Mammary epithelial cell (primary cell): ENCODE measurements at regions of chr16 and their contacts with region 1.

Region 1: DNA sequence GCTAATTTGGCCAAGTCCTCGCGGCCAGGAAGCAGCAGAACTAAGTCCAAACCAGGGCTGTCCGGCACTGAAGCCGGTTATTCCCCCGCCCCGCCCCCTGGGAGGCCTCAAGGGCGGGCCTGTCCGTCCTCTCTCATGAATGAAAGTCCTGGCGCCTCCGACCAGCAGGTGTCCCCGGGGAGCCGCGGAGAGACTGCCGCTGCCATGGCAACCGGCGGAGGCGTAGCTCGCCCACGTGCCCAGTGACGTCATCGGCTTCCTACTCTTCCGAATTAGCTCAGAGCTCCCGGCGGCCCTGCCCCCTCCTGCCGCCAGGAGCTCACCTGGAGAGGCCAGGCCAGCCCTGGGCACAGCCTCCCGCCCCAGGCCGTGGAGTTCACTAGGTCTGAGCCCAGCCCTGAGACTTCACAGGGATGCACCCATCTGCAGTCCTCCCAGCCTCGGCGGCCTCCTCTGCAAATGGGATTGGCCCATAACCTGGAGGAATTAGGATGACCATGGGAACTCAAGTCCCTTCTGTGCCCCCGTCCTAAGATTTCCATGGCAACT is 1.3 kb downstream of the SPATA2L start:
- DNase-seq: peak; percentile 98
- H3K4me3 ChIP-seq: peak overlapping the region; percentile 7 to 92 (median 72)
- H3K27ac ChIP-seq: peak overlapping the region; percentile 26
- H3K4me1 ChIP-seq: peaks cover 16% of the 10 kb centered on the region
- H3K27me3 ChIP-seq: no peaks in the 10 kb centered on the region
- CTCF ChIP-seq: peak; percentile 44 to 89

Region 2: DNA sequence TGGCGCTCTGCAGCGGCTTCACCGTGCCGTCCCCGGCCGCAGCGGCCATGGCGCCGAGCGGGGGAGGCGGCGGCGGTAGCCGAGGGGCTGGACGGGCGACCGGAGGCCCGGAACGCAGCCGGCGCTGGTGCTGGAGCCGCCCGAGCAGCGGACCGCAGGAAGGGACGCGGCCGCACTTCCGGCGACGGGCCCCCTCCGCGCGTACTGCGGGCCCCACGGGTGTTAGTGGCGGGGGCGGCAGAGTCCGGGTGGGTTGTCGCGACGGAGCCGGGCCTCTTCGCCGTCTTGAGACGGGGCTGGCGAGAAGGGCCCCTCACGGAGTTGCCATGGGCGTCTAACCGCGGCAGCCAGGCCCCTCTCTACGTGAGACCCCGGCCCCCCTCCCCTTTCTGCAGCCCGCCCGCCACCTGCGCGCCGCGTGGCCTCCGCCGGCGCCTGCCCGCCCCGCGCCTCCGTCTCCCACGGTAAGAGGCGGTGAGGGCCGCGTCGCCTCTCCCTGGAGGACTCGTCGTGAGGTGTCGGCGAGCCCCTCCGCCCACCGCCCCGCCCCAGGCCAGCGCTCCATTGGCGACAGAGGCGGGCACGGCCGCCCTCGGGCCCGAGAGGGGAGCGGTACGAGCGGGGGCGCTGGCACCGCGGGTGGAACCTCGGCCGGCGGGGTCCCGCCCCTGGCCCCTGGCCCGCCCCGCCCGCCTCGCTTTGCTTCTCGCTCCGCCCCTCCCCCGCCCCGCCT is 20.8 kb after region 1 on chr16 and contains the starts of genes VPS9D1 and ZNF276:
- CTCF ChIA-PET with region 1: no interaction called
- dilution Hi-C with region 1: no loop called
- in situ Hi-C with region 1: no loop called
- intact Hi-C with region 1: loop called (anchors 1 kb)
- DNase-seq: peak; percentile 79
- H3K4me3 ChIP-seq: peak within 1 kb of the TSS; percentile 54 to 79 (median 61)
- H3K27ac ChIP-seq: peak within 1 kb of the TSS; percentile 36
- H3K4me1 ChIP-seq: peaks cover 36% of the 10 kb centered on the region
- H3K27me3 ChIP-seq: no peaks in the 10 kb centered on the region
- CTCF ChIP-seq: no peak
- total RNA-seq, gene VPS9D1: 4.3 to 8.0 TPM
- total RNA-seq, gene ZNF276: 11.5 to 20.4 TPM

Region 3: DNA sequence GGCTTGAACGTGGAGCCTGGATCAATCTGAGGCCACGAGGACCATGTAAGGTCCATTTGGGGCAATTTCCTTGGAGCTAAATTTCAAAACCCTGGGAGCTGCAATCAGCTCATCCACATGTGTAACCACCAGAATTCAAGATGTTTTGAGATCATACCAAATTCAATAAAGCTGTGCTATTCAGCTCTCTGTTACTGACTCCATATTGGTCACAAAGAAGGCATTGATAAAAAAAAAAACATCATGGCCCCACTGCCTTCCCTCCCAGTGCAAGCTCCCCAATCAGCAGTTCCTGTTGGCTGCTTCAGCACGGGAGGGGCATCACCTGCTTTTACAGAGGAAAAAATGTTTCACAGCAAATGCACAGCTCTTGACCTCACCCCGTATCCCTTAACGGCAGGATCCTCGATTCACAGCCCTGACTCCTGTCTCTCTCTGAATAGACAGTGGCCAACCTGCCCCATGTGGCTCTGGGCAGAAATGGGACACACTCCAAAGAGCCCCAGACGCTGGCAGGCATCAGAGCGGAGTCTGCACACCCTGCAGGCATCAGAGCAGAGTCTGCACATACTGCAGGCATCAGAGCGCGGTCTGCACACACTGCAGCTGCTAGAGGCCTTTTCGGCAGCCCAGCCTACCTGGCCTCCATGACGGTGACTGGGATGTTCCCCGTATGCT is 79.2 kb after region 1 on chr16:
- CTCF ChIA-PET with region 1: no interaction called
- dilution Hi-C with region 1: no loop called
- in situ Hi-C with region 1: loop called in 1 of 2 experiments (anchors 5 kb)
- intact Hi-C with region 1: no loop called
- DNase-seq: no peak
- H3K4me3 ChIP-seq: no peak overlapping the region
- H3K27ac ChIP-seq: no peak overlapping the region
- H3K4me1 ChIP-seq: no peaks in the 10 kb centered on the region
- H3K27me3 ChIP-seq: no peaks in the 10 kb centered on the region
- CTCF ChIP-seq: no peak

Region 4: GRCh38 chr16:89860747-89861304 is 160.7 kb after region 1 on chr16:
- CTCF ChIA-PET with region 1: interaction called, 6 read pairs
- dilution Hi-C with region 1: no loop called
- in situ Hi-C with region 1: no loop called
- intact Hi-C with region 1: loop called (anchors 1 kb)
- DNase-seq: peak; percentile 32
- H3K4me3 ChIP-seq: no peak overlapping the region
- H3K27ac ChIP-seq: no peak overlapping the region
- H3K4me1 ChIP-seq: peaks cover 23% of the 10 kb centered on the region
- H3K27me3 ChIP-seq: no peaks in the 10 kb centered on the region
- CTCF ChIP-seq: peak; percentile 91 to 98

Region 5: DNA sequence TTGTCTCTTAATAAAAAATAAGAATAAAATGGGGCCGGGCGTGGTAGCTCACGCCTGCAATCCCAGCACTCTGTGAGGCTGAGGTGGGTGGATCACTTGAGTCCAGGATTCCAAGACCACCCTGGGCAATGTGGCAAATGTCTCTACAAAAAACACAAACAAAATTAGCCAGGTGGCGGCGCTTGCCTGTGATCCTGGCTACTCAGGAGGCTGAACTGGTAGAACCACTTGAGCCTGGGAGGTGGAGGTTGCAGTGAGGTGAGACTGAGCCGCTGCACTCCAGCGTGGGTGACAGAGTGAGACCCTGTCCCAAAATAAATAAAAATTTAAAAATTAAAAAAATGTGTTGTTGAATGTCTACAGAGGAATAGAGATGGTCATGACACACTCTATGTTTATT is 245.5 kb after region 1 on chr16:
- CTCF ChIA-PET with region 1: no interaction called
- dilution Hi-C with region 1: no loop called
- in situ Hi-C with region 1: no loop called
- intact Hi-C with region 1: loop called (anchors 1 kb)
- DNase-seq: no peak
- H3K4me3 ChIP-seq: no peak overlapping the region
- H3K27ac ChIP-seq: no peak overlapping the region
- H3K4me1 ChIP-seq: peaks cover 13% of the 10 kb centered on the region
- H3K27me3 ChIP-seq: no peaks in the 10 kb centered on the region
- CTCF ChIP-seq: peak in 1 of 2 donors; percentile 1